Activated CD8-positive, alpha-beta T cell treated with anti-CD3 and anti-CD28 coated beads, Interleukin-2, amount 10 ng/mL, durations not matched to agents 7 days and 5 days (primary cell): ENCODE measurements at regions of chr9 and their contacts with region 1.

Region 1: GRCh38 chr9:92963831-92964626 is 16.7 kb downstream of the FGD3 start:
- DNase-seq: peak; percentile 89
- ATAC-seq: peak; percentile 73
- H3K4me3 Mint-ChIP-seq: peak overlapping the region; percentile 91
- H3K27ac Mint-ChIP-seq: peak overlapping the region; percentile 100
- H3K4me1 Mint-ChIP-seq: peaks cover 58% of the 10 kb centered on the region
- H3K27me3 Mint-ChIP-seq: no peaks in the 10 kb centered on the region

Region 2: DNA sequence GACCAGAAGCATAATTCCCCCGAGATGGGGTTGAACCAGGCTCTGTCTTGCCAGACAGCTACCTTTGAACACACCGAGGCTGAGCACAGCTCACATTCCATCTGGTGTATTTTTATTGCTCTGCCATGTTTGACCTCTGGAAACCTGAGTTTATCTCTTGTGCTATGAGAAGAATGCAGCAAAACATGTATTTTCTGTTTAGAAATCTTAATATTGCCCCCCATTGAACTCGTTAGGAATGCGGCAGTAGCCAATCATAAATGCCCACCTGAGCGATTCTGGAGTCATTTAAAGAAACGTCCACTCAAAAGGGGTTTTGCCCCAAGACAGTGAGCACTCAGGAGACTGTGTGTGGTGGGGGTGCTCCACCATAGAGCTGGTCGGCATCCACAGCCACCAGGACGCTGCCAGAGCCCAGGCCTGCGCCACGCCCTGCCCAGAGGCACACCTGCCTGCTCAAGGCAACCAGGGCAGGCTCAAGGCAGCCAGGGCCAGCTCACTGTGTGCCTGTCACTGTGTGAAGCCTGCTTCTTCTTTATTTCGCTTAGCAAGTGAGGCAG is 10.2 kb after region 1 on chr9:
- CTCF ChIA-PET with region 1: no interaction called
- POLR2A ChIA-PET with region 1: interaction called, 24 read pairs
- DNase-seq: no peak
- ATAC-seq: no peak
- H3K4me3 Mint-ChIP-seq: no peak overlapping the region
- H3K27ac Mint-ChIP-seq: peak overlapping the region; percentile 76
- H3K4me1 Mint-ChIP-seq: peaks cover 84% of the 10 kb centered on the region
- H3K27me3 Mint-ChIP-seq: no peaks in the 10 kb centered on the region

Region 3: DNA sequence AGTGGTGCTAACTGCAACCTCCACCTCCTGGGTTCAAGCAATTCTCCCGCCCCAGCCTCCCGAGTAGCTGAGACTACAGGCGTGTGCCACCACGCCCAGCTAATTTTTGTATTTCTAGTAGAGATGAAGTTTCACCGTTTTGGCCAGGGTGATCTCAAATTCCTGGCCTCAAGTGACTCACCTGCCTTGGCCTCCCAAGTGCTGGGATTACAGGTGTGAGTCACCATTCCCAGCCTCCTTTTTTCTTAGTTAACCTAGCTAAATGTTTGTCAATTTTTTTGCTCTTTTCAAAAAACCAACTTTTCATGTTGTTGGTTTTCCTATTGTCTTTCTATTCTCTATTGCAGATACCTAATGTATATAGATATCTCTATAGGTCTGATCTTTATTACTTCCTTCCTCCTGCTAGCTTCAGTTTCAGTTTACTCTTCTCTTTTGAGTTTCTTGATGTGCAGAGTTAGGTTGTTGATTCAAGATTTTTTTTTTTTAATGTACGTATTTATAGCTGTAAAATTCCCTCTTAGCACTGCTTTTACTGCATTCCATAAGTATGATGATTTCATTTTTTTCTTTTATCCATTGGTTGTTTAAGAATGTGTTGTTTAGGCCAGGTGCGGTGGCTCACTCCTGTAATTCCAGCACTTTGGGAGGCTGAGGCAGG is 16.2 kb after region 1 on chr9:
- CTCF ChIA-PET with region 1: no interaction called
- POLR2A ChIA-PET with region 1: interaction called, 24 read pairs
- DNase-seq: no peak
- ATAC-seq: peak; percentile 70
- H3K4me3 Mint-ChIP-seq: peak overlapping the region; percentile 51
- H3K27ac Mint-ChIP-seq: peak overlapping the region; percentile 87
- H3K4me1 Mint-ChIP-seq: peaks cover 57% of the 10 kb centered on the region
- H3K27me3 Mint-ChIP-seq: no peaks in the 10 kb centered on the region

Region 4: GRCh38 chr9:92992549-92992948 is 28.5 kb after region 1 on chr9:
- CTCF ChIA-PET with region 1: interaction called, 4 read pairs
- POLR2A ChIA-PET with region 1: interaction called, 12 read pairs
- DNase-seq: no peak
- ATAC-seq: no peak
- H3K4me3 Mint-ChIP-seq: no peak overlapping the region
- H3K27ac Mint-ChIP-seq: no peak overlapping the region
- H3K4me1 Mint-ChIP-seq: peaks cover 77% of the 10 kb centered on the region
- H3K27me3 Mint-ChIP-seq: no peaks in the 10 kb centered on the region

Region 5: DNA sequence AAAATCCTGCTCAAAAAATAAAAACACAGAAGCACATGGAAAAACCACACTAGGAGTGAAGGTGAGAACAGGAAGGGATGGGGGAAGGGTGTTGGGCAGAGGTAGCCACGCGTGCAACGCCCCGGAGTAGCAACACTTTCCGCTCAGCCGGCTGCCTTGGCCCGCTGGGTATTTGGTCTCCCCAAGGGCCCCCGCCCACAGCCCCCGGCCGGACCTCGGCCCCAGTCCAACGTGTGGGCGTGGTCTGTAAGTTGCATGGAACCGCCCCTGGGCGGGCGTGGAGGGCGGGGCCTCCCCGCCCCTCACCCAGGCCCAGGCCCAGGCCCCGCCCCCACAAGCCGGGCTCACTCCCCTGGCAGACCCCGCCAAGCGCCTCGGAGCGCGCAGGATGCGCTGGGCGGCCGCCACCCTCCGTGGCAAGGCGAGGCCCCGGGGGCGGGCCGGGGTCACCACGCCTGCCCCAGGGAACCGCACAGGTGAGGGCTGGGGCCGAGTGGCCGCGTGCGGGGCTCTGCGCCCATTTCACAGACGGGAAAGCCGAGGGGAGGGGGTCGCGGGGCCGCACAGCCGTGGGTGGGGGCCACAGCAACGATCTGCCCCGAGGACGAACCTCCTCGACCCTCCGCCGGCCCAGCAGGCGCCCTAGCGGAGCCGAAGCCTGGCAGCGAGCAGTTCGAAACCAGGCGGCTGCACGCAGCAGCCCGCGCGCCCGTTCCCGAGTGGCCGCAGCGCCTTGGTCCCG is 94.5 kb after region 1 on chr9 and contains the start of gene SUSD3:
- CTCF ChIA-PET with region 1: interaction called, 3 read pairs
- POLR2A ChIA-PET with region 1: interaction called, 13 read pairs
- DNase-seq: peak; percentile 73
- ATAC-seq: peak; percentile 67
- H3K4me3 Mint-ChIP-seq: peak within 1 kb of the TSS; percentile 90
- H3K27ac Mint-ChIP-seq: peak within 1 kb of the TSS; percentile 82
- H3K4me1 Mint-ChIP-seq: peaks cover 69% of the 10 kb centered on the region
- H3K27me3 Mint-ChIP-seq: no peaks in the 10 kb centered on the region
- total RNA-seq, gene SUSD3: 57.9 to 59.6 TPM